ENCODE measurements at regions of chr13 and their contacts with region 1.

Region 1: DNA sequence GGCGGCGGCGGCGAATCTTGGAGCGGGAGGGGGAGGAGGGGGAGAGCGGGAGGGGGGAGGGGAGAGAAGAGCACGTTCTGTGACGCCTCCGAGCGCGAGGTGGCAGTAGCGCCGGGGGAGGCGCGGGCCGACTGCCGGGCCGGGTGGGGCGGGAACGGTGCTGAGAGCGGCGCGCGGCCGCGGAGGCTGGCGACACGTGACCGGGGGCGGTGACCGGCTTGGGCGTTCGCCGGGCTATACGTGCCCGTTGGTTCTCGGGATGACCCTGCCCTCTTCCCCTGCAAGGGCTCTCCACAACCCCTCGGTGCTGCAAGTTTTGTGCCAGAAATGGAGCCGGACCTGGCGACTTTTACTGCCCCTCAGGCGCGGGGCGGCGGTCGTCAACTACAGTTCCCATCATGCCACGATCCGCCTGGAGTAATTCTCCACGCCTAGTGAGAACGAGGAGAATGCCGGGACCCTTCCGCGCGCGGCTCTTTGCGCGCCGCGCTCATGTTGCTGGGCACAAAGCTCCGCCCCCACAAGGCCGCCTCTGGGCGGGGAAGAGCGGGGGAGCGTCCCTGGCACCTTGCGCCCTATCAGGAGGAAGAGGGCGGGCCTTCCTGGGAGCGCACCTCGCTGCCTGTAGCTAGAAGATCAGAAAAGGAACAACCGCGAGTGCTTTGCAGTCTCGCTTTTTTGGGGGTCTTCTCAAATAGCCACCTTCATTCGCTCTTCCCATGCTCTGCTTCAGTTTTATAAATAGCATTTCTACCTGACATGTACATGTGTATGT is at the start of gene KPNA3:
- DNase-seq: peak; percentile 93
- H3K4me3 Mint-ChIP-seq: peak within 1 kb of the TSS; percentile 96
- H3K27ac Mint-ChIP-seq: peak within 1 kb of the TSS; percentile 97
- H3K4me1 Mint-ChIP-seq: peaks cover 30% of the 10 kb centered on the region
- H3K27me3 Mint-ChIP-seq: peaks cover 6% of the 10 kb centered on the region
- total RNA-seq, gene KPNA3: 54.7 and 55.0 TPM in 2 replicates

Region 2: GRCh38 chr13:49300739-49301589 is 491.8 kb before region 1 on chr13:
- intact Hi-C with region 1: loop called (anchors 1 kb)
- DNase-seq: peak; percentile 61
- H3K4me3 Mint-ChIP-seq: peak overlapping the region; percentile 10
- H3K27ac Mint-ChIP-seq: peak overlapping the region; percentile 65
- H3K4me1 Mint-ChIP-seq: peaks cover 14% of the 10 kb centered on the region
- H3K27me3 Mint-ChIP-seq: no peaks in the 10 kb centered on the region

Region 3: DNA sequence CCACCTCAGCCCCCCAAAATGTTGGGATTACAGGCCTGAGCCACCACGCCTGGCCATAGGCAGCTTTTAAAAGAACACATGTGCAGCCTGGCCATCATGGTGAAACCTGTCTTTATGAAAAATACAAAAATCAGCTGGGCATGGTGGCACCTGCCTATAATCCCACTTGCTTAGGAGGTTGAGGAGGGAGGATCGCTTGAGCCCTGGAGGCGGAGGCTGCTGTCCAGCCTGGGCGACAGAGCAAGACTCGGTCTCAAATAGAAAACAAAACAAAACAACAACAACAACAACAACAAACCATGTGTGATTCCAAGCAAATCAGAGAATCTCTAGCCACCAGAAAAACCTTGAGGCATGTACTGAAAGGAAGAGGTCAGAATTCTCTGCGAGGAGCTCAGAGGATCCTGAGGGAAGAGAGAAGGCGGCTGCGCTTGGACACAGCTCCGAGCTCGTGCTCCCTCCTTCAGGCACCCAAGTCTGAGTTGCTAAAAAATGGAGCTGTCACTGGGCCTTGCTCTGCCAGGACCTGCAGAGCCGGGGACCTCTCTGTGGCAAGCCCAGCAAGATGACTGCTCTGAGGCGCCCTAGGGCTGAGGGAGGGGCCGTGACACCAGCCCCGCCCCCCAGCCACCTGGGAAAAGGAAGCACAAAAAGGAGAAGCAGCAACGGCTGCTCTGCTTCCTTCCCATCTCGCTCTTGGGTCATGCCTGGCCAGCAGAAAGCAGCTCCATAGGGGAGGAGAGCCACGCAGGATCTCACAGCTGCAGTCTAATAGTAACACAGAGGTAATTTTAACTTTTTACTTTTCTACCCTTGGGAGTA is 164.7 kb before region 1 on chr13 and contains the start of gene ARL11:
- intact Hi-C with region 1: loop called (anchors 5 kb)
- DNase-seq: peak; percentile 58
- H3K4me3 Mint-ChIP-seq: peak within 1 kb of the TSS; percentile 92
- H3K27ac Mint-ChIP-seq: peak within 1 kb of the TSS; percentile 90
- H3K4me1 Mint-ChIP-seq: peaks cover 17% of the 10 kb centered on the region
- H3K27me3 Mint-ChIP-seq: peaks cover 2% of the 10 kb centered on the region
- total RNA-seq, gene ARL11: 0.80 and 0.93 TPM in 2 replicates

Region 4: DNA sequence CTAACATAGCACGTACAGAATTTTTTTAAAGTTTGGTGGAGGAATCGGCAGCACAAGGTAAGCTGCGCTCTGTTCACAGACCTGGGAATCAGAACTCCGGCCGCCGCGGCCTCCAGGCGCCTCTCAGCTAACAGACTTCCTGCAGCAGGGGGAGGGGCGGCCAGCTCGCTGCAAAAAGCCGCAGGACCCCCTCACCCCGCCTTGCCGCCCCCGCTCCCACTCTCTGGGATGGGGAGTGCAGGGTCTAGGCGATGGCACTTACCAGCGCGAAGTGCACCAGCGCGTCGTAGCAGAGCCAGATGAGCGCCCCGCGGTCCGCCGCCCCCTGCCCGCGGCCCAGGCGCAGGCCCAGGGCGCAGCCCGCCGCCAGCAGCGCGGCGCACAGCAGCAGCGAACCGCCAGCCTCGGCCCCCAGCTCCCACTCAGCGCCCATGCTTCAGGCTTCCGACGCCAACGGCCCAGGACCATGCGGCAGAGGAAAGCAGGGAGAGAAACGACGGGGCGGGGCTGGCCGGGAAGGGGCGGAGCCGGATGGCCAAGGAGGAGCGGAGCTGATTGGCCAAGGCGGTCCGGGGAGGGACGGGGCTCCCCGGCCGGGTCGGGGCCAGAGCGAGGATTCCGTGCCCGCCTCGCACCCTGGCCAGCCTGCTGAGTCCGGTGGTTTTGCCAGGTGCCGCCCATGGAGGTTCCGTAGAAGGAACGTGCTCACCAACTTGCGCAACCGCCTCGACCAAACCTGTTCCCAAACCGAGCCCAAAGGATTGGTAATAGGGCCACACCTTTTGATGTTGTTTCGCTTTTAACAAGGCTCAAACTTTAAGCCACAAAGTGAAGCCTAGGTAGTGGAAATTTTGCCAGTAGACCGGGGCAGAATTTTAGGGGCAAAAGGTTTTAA is 101.5 kb before region 1 on chr13 and contains the start of gene EBPL:
- intact Hi-C with region 1: loop called (anchors 1 kb)
- DNase-seq: peak; percentile 83
- H3K4me3 Mint-ChIP-seq: peak within 1 kb of the TSS; percentile 92
- H3K27ac Mint-ChIP-seq: peak within 1 kb of the TSS; percentile 77
- H3K4me1 Mint-ChIP-seq: peaks cover 34% of the 10 kb centered on the region
- H3K27me3 Mint-ChIP-seq: no peaks in the 10 kb centered on the region
- total RNA-seq, gene EBPL: 42.6 and 44.6 TPM in 2 replicates

Region 5: GRCh38 chr13:49908637-49909036 is 115.9 kb after region 1 on chr13:
- intact Hi-C with region 1: no loop called
- DNase-seq: no peak
- H3K4me3 Mint-ChIP-seq: no peak overlapping the region
- H3K27ac Mint-ChIP-seq: no peak overlapping the region
- H3K4me1 Mint-ChIP-seq: peaks cover 5% of the 10 kb centered on the region
- H3K27me3 Mint-ChIP-seq: no peaks in the 10 kb centered on the region

Region 6: DNA sequence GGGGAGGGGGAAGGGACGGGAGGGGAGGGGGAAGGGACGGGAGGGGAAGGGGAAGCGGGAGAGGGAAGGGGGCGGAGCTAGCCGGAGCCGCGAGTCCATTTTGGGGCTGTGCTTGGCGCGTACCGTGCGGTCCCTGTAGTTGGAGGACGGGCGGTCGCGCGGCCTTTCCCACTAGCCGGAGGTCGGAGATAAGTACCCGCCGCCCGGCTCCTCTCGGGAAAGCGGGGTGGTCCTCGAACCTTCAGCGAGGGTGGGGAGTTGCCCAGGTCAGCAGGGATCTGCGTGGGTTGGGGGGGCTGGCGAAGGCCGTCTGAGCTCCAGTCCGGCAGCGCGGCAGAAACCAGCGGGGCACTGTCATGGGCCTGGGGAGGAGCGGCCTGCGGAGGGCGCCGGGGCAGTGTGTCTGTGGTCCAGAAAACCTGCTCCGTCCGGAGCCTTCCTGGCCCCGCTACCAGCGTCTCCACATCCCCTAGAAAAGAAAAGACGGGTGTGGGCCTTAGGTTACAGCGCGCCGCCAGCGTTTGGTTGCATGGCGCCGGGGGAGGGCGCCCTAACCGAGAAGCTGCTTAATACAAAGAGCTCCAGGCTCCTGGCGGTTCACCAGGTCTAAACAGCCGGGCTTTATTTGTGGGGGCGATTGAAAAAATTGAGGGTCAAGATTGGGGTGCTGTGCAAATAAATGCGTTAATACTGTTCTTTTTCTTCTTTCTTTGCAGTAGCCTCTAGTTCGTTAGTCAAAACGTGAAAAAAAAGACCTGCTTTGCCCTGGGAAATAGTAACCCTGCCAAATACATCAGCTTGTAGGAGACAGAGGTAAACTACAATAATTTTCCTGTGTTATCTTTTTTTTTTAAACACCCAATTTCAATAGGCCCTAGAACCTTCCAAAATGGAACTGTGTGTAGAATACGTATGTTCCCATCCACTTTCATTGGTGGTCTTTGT is 204.5 kb after region 1 on chr13 and contains the start of gene TRIM13:
- intact Hi-C with region 1: loop called (anchors 1 kb)
- DNase-seq: peak; percentile 76
- H3K4me3 Mint-ChIP-seq: peak within 1 kb of the TSS; percentile 87
- H3K27ac Mint-ChIP-seq: peak within 1 kb of the TSS; percentile 82
- H3K4me1 Mint-ChIP-seq: peaks cover 54% of the 10 kb centered on the region
- H3K27me3 Mint-ChIP-seq: no peaks in the 10 kb centered on the region
- total RNA-seq, gene TRIM13: 14.7 and 16.5 TPM in 2 replicates

Region 7: GRCh38 chr13:50116430-50116973 is 323.8 kb after region 1 on chr13:
- intact Hi-C with region 1: no loop called
- DNase-seq: no peak
- H3K4me3 Mint-ChIP-seq: no peak overlapping the region
- H3K27ac Mint-ChIP-seq: no peak overlapping the region
- H3K4me1 Mint-ChIP-seq: peaks cover 8% of the 10 kb centered on the region
- H3K27me3 Mint-ChIP-seq: no peaks in the 10 kb centered on the region

Measured in activated T-helper 1 cell treated with anti-CD3 and anti-CD28 coated beads, Interleukin-12 subunit alpha, Interleukin-12 subunit beta, Interleukin-2, Interleukin-4 antibody, amounts not matched to agents 30 ng/mL and 10 ng/mL and 1 ng/mL, durations not matched to agents 14 hours and 24 hours and 36 hours (primary cell).